ENCODE measurements at regions of chr1 and their contacts with region 1.

Region 1: GRCh38 chr1:235999259-235999925 is 65.5 kb downstream of the NID1 start:
- DNase-seq: peak; percentile 83
- H3K4me3 Mint-ChIP-seq: peak overlapping the region; percentile 53
- H3K27ac Mint-ChIP-seq: peak overlapping the region; percentile 89
- H3K4me1 Mint-ChIP-seq: peaks cover 53% of the 10 kb centered on the region
- H3K27me3 Mint-ChIP-seq: no peaks in the 10 kb centered on the region

Region 2: GRCh38 chr1:235648954-235649367 is 350.4 kb before region 1 on chr1:
- CTCF ChIA-PET with region 1: interaction called, 4 read pairs
- POLR2A ChIA-PET with region 1: no interaction called
- intact Hi-C with region 1: loop called (anchors 10 kb)
- DNase-seq: peak; percentile 80
- H3K4me3 Mint-ChIP-seq: peak overlapping the region; percentile 78
- H3K27ac Mint-ChIP-seq: no peak overlapping the region
- H3K4me1 Mint-ChIP-seq: peaks cover 4% of the 10 kb centered on the region
- H3K27me3 Mint-ChIP-seq: peaks cover 52% of the 10 kb centered on the region

Region 3: DNA sequence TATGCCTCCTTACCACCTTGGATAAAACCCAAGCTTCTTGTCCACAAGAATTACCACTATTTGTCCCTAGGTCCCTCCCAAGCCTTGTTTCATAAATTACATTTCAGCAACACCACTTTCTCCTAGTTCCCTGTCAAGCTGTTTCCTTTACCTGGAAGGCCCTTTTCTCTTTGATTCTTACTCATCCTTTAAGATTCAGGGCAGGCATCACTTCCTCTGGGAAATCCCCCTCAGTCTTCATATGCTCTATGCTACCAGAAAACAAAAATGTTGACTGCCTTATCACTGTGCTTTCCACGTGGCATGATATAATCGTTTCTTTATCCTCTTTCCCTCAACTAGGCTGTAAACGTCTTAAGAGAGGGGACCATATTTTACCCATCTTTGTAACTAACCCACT is 235.4 kb before region 1 on chr1:
- CTCF ChIA-PET with region 1: no interaction called
- POLR2A ChIA-PET with region 1: no interaction called
- intact Hi-C with region 1: loop called (anchors 1 kb)
- DNase-seq: peak; percentile 36
- H3K4me3 Mint-ChIP-seq: no peak overlapping the region
- H3K27ac Mint-ChIP-seq: no peak overlapping the region
- H3K4me1 Mint-ChIP-seq: peaks cover 8% of the 10 kb centered on the region
- H3K27me3 Mint-ChIP-seq: no peaks in the 10 kb centered on the region

Region 4: DNA sequence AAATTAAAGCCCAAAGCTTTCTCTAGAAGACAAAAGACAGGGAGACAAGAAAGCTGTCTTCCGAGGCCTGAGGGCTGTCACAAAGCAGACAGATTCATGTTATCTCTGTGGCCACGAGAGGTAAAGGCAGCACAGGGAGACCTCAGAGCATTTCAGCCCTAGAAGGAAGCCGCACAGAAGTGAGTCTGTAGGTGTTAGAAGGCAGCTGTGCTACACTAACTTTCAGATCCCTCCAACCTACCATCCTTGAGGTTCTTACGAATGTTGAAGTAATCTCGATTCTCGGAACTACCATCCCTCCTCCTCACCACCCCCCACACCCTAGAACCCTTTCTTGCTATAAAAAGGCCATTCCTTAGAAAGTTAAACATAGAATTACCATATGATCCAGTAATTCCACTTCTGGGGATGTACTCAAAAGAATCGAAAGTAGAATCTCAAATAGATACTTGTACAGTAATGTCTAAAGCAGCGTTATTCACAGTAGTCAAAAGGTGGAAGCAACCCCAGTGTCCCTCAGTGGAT is 111.2 kb before region 1 on chr1:
- CTCF ChIA-PET with region 1: no interaction called
- POLR2A ChIA-PET with region 1: interaction called, 3 read pairs
- intact Hi-C with region 1: loop called (anchors 1 kb)
- DNase-seq: peak; percentile 78
- H3K4me3 Mint-ChIP-seq: peak overlapping the region; percentile 20
- H3K27ac Mint-ChIP-seq: peak overlapping the region; percentile 80
- H3K4me1 Mint-ChIP-seq: peaks cover 46% of the 10 kb centered on the region
- H3K27me3 Mint-ChIP-seq: no peaks in the 10 kb centered on the region

Region 5: GRCh38 chr1:235954306-235955283 is 44.8 kb before region 1 on chr1:
- CTCF ChIA-PET with region 1: no interaction called
- POLR2A ChIA-PET with region 1: interaction called, 3 read pairs
- intact Hi-C with region 1: loop called (anchors 1 kb)
- DNase-seq: peak; percentile 67
- H3K4me3 Mint-ChIP-seq: no peak overlapping the region
- H3K27ac Mint-ChIP-seq: no peak overlapping the region
- H3K4me1 Mint-ChIP-seq: peaks cover 33% of the 10 kb centered on the region
- H3K27me3 Mint-ChIP-seq: no peaks in the 10 kb centered on the region

Region 6: GRCh38 chr1:236523701-236524141 is 524.3 kb after region 1 on chr1 and contains the start of gene LGALS8:
- CTCF ChIA-PET with region 1: no interaction called
- POLR2A ChIA-PET with region 1: no interaction called
- intact Hi-C with region 1: loop called (anchors 10 kb)
- DNase-seq: peak; percentile 94
- H3K4me3 Mint-ChIP-seq: peak within 1 kb of the TSS; percentile 97
- H3K27ac Mint-ChIP-seq: peak within 1 kb of the TSS; percentile 98
- H3K4me1 Mint-ChIP-seq: peaks cover 23% of the 10 kb centered on the region
- H3K27me3 Mint-ChIP-seq: no peaks in the 10 kb centered on the region
- total RNA-seq, gene LGALS8: 83.7 to 88.3 TPM

Measured in activated CD4-positive, alpha-beta memory T cell treated with anti-CD3 and anti-CD28 coated beads for 36 hours (primary cell).